ENCODE measurements at regions of chr9 and their contacts with region 1.

Region 1: GRCh38 chr9:72443855-72444254 is 77.6 kb upstream of the TMC1 start:
- DNase-seq: no peak
- H3K4me3 ChIP-seq: no peak overlapping the region
- H3K27ac ChIP-seq: no peak overlapping the region
- H3K27me3 ChIP-seq: no peaks in the 10 kb centered on the region
- CTCF ChIP-seq: no peak

Region 2: DNA sequence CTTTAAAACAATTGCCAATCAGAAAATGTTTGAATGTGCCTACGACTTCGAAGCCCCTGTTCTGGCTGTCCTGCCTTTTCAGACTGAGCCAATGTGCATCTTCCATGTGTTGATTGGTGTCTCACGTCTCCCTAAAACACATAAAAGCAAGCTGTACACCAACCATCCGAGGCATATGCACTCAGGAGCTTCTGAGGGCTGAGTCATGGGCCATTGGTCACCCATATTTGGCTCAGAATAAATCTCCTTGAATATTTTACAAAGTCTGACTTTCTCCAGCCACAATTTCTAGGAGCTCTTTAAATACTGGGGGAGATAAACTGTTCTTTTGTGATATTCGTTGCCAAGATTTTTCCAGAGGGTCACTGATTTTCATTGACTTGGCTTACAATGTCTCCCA is 437.4 kb before region 1 on chr9:
- CTCF ChIA-PET with region 1: no interaction called
- POLR2A ChIA-PET with region 1: no interaction called
- DNase-seq: no peak
- H3K4me3 ChIP-seq: no peak overlapping the region
- H3K27ac ChIP-seq: no peak overlapping the region
- H3K27me3 ChIP-seq: no peaks in the 10 kb centered on the region
- CTCF ChIP-seq: no peak

Region 3: GRCh38 chr9:72428329-72428728 is 15.5 kb before region 1 on chr9:
- CTCF ChIA-PET with region 1: interaction called, 3 read pairs
- POLR2A ChIA-PET with region 1: interaction called, 10 read pairs
- DNase-seq: no peak
- H3K4me3 ChIP-seq: no peak overlapping the region
- H3K27ac ChIP-seq: no peak overlapping the region
- H3K27me3 ChIP-seq: no peaks in the 10 kb centered on the region
- CTCF ChIP-seq: no peak

Region 4: DNA sequence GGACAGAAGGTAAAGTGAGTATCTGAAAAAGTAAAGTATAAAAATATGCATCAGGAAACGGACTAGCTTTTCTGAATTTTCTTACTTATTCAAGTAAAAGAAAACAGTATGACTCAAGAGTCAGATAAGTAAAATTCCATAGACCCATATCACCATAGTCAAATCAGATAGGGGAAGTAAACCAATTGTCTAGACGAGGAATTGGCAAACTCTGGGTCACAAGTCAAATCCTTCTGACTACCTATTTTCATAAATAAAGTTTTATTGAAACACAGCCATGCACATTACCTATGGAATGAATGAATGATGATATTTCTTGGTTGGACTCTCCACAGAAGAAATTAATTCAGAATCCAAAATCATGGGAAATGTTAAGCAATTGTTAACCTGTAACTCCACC is 18.5 kb after region 1 on chr9:
- CTCF ChIA-PET with region 1: no interaction called
- POLR2A ChIA-PET with region 1: no interaction called
- DNase-seq: no peak
- H3K4me3 ChIP-seq: no peak overlapping the region
- H3K27ac ChIP-seq: no peak overlapping the region
- H3K27me3 ChIP-seq: no peaks in the 10 kb centered on the region
- CTCF ChIP-seq: no peak

Region 5: DNA sequence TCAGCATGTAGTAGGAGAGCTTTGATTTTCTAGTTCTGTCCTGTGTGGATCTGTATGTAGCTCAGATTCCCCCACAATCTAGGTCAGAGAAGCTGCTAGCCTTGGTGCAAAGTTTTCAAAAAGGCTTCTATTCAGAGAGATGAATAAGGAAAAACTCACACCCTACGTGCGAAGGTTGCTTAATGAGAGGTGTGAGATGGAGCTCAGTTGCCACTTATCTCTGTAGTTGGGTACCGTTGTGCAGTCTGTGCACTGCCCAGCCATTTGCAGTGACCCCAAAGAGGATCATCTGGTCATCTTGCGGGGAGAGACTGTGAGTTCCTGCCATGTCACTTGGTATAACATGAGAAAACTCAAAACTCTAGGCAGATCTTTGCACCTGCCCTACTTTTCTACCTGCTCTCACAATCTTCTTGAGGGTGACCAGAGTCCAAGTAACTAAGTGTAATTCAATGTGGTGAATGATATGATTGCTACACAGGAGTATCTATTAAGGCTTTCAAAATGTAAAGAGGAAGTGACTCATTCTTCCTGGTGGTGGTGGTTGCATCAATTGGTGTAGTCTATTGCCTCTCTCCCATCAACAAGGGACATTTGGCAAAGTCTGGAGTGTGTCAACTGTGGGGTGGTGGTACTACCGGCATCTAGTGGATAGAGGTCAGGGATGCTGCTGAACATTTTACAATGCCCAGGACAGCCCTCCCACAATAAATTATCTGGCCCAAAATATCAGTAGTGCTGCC is 142.7 kb after region 1 on chr9:
- CTCF ChIA-PET with region 1: no interaction called
- POLR2A ChIA-PET with region 1: no interaction called
- DNase-seq: peak; percentile 37
- H3K4me3 ChIP-seq: no peak overlapping the region
- H3K27ac ChIP-seq: peak overlapping the region; percentile 83
- H3K27me3 ChIP-seq: no peaks in the 10 kb centered on the region
- CTCF ChIP-seq: peak; percentile 22; the same call in 1 of the 2 replicates

Region 6: DNA sequence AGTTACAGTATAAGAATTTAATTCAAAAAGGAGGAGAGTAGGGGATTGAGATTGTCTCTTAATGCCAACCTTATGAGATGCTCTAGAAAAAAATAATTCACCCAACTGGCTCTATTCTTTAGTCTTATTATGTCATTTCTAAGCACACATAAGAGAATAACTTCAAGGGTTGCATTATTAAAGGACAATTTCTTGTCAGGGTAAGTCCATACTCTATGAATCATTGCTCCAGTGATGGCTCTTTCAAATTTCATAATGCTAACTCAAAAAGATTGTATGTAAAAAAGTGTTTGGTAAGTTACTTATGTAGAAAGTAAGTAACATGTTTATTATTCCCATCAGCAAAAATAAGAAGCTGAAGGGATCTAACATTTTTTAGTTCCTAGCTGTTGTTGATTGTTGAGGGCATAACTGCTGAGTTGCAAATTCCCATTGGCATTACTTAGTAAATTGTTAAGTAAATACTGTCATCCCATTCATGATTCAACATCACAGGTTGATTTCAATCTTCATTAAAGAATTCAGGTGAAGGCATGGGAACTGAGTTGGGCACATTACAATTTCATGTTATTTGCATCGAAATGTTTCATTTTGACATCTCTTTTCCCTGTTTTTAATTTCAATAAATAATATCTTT is 480.4 kb after region 1 on chr9:
- CTCF ChIA-PET with region 1: no interaction called
- POLR2A ChIA-PET with region 1: no interaction called
- DNase-seq: no peak
- H3K4me3 ChIP-seq: no peak overlapping the region
- H3K27ac ChIP-seq: no peak overlapping the region
- H3K27me3 ChIP-seq: no peaks in the 10 kb centered on the region
- CTCF ChIP-seq: no peak

Measured in AG04450 (cell line).